ENCODE measurements at regions of chr1 and their contacts with region 1.

Region 1: GRCh38 chr1:109910123-109910962 is at the start of gene CSF1:
- DNase-seq: peak; percentile 98
- H3K4me3 ChIP-seq: peak within 1 kb of the TSS; percentile 65 to 91 (median 78)
- H3K27ac ChIP-seq: peak within 1 kb of the TSS; percentile 81 to 88 (median 86)
- H3K4me1 ChIP-seq: peaks cover 53 to 64% (median 57%) of the 10 kb centered on the region in 4 donors
- H3K27me3 ChIP-seq: no peaks in the 10 kb centered on the region
- CTCF ChIP-seq: no peak
- EP300 ChIP-seq: no peak
- POLR2A ChIP-seq: peak; percentile 25
- total RNA-seq, gene CSF1: 27.0 to 92.6 (median 48.1) TPM

Region 2: DNA sequence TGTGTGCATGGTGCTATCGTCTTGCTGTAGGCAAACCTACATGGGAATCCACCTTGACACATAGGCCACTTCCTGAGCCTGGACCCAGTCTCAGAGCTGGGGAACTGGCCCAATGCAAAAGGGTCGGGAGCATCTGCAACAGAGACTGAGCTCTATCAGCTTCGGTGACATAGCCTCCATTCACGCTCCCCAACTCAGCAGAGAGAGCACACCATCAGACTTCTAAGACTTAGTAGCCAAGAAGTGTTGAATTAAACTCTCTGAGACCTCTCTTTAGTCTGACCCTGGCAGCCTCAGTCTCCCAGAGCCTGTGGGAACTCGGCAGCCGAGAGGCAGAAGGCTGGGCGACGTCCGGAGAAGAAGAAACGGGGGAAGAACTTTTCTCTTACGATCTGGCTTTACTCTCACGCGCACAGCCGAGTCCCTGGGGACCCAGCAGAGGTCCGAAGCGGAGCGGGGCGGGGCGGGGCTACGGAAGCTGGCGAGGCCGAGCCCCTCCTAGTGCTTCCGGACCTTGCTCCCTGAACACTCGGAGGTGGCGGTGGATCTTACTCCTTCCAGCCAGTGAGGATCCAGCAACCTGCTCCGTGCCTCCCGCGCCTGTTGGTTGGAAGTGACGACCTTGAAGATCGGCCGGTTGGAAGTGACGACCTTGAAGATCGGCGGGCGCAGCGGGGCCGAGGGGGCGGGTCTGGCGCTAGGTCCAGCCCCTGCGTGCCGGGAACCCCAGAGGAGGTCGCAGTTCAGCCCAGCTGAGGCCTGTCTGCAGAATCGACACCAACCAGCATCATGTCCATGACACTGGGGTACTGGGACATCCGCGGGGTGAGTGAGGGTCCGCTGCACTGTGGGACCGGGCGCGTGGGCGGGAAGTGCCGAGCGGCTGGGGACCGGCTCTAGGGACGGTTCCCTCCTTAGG is 254.5 kb before region 1 on chr1 and contains the start of gene GSTM4:
- intact Hi-C with region 1: loop called (anchors 10 kb)
- DNase-seq: peak; percentile 97
- H3K4me3 ChIP-seq: peak within 1 kb of the TSS; percentile 52 to 78 (median 66)
- H3K27ac ChIP-seq: peak within 1 kb of the TSS; percentile 84 to 93 (median 88)
- H3K4me1 ChIP-seq: peaks cover 17 to 28% (median 23%) of the 10 kb centered on the region in 4 donors
- H3K27me3 ChIP-seq: no peaks in the 10 kb centered on the region
- CTCF ChIP-seq: no peak
- EP300 ChIP-seq: no peak
- POLR2A ChIP-seq: no peak
- total RNA-seq, gene GSTM4: 33.1 to 43.1 (median 39.1) TPM

Region 3: GRCh38 chr1:109773146-109773899 is 137.0 kb before region 1 on chr1:
- intact Hi-C with region 1: loop called (anchors 5 kb)
- DNase-seq: peak; percentile 94
- H3K4me3 ChIP-seq: no peak overlapping the region
- H3K27ac ChIP-seq: no peak overlapping the region
- H3K4me1 ChIP-seq: peaks cover 7 to 21% (median 16%) of the 10 kb centered on the region in 4 donors
- H3K27me3 ChIP-seq: no peaks in the 10 kb centered on the region
- CTCF ChIP-seq: peak; percentile 86 to 92 (median 89)
- EP300 ChIP-seq: no peak
- POLR2A ChIP-seq: no peak

Region 4: GRCh38 chr1:109794319-109795132 is 115.8 kb before region 1 on chr1:
- intact Hi-C with region 1: loop called (anchors 5 kb)
- DNase-seq: no peak
- H3K4me3 ChIP-seq: no peak overlapping the region
- H3K27ac ChIP-seq: peak overlapping the region in 3 of 4 donors; percentile 50 to 67 (median 66)
- H3K4me1 ChIP-seq: peaks cover 64 to 74% (median 69%) of the 10 kb centered on the region in 4 donors
- H3K27me3 ChIP-seq: no peaks in the 10 kb centered on the region
- CTCF ChIP-seq: no peak
- EP300 ChIP-seq: no peak
- POLR2A ChIP-seq: no peak

Region 5: GRCh38 chr1:109850194-109850593 is 60.1 kb before region 1 on chr1:
- intact Hi-C with region 1: no loop called
- DNase-seq: no peak
- H3K4me3 ChIP-seq: no peak overlapping the region
- H3K27ac ChIP-seq: no peak overlapping the region
- H3K4me1 ChIP-seq: peaks cover 0 to 9% (median 4%) of the 10 kb centered on the region in 4 donors
- H3K27me3 ChIP-seq: no peaks in the 10 kb centered on the region
- CTCF ChIP-seq: no peak
- EP300 ChIP-seq: no peak
- POLR2A ChIP-seq: no peak

Region 6: GRCh38 chr1:109877320-109877771 is 33.0 kb before region 1 on chr1:
- intact Hi-C with region 1: loop called (anchors 5 kb)
- DNase-seq: peak; percentile 94
- H3K4me3 ChIP-seq: peak overlapping the region; percentile 11 to 33 (median 27)
- H3K27ac ChIP-seq: peak overlapping the region; percentile 81 to 91 (median 88)
- H3K4me1 ChIP-seq: peaks cover 31 to 53% (median 48%) of the 10 kb centered on the region in 4 donors
- H3K27me3 ChIP-seq: no peaks in the 10 kb centered on the region
- CTCF ChIP-seq: peak; percentile 9 to 41 (median 15)
- EP300 ChIP-seq: no peak
- POLR2A ChIP-seq: no peak

Region 7: GRCh38 chr1:109984456-109985275 is 74.3 kb after region 1 on chr1 and contains the start of gene AHCYL1:
- intact Hi-C with region 1: loop called (anchors 5 kb)
- DNase-seq: peak; percentile 100
- H3K4me3 ChIP-seq: peak within 1 kb of the TSS; percentile 75 to 95 (median 82)
- H3K27ac ChIP-seq: peak within 1 kb of the TSS; percentile 95 to 99 (median 97)
- H3K4me1 ChIP-seq: peaks cover 52 to 68% (median 58%) of the 10 kb centered on the region in 4 donors
- H3K27me3 ChIP-seq: no peaks in the 10 kb centered on the region
- CTCF ChIP-seq: peak; percentile 98 to 99 (median 99)
- EP300 ChIP-seq: peak; percentile 84
- POLR2A ChIP-seq: peak; percentile 98
- total RNA-seq, gene AHCYL1: 72.1 to 111 (median 91.0) TPM

Region 8: GRCh38 chr1:110412576-110412975 is 502.2 kb after region 1 on chr1:
- intact Hi-C with region 1: no loop called
- DNase-seq: no peak
- H3K4me3 ChIP-seq: no peak overlapping the region
- H3K27ac ChIP-seq: no peak overlapping the region
- H3K4me1 ChIP-seq: peaks cover 11 to 17% (median 14%) of the 10 kb centered on the region in 4 donors
- H3K27me3 ChIP-seq: no peaks in the 10 kb centered on the region
- CTCF ChIP-seq: peak; percentile 64 to 72 (median 67)
- EP300 ChIP-seq: no peak
- POLR2A ChIP-seq: no peak